Heart right ventricle (tissue), 16 donors: ENCODE measurements at regions of chr9 and their contacts with region 1.

Region 1: GRCh38 chr9:15606643-15607472 is 54.0 kb downstream of the CCDC171 start:
- DNase-seq: peak in 1 of 2 donors; percentile 5
- ATAC-seq: peak in 2 of 8 donors; percentile 52 to 56
- H3K4me3 ChIP-seq: no peak overlapping the region
- H3K27ac ChIP-seq: no peak overlapping the region
- H3K4me1 ChIP-seq: no peaks in the 10 kb centered on the region
- H3K27me3 ChIP-seq: no peaks in the 10 kb centered on the region
- CTCF ChIP-seq: peak; percentile 66 to 87 (median 77)

Region 2: GRCh38 chr9:15211160-15211814 is 395.6 kb before region 1 on chr9:
- intact Hi-C with region 1: loop called (anchors 2 to 10 kb)
- DNase-seq: peak in 1 of 2 donors; percentile 81
- ATAC-seq: peak in 7 of 8 donors; percentile 55 to 83 (median 65)
- H3K4me3 ChIP-seq: no peak overlapping the region
- H3K27ac ChIP-seq: peak overlapping the region in 1 of 10 donors; percentile 22
- H3K4me1 ChIP-seq: peaks cover 0 to 10% (median 7%) of the 10 kb centered on the region in 9 donors
- H3K27me3 ChIP-seq: no peaks in the 10 kb centered on the region
- CTCF ChIP-seq: peak; percentile 80 to 96 (median 92)

Region 3: GRCh38 chr9:15286161-15286821 is 320.6 kb before region 1 on chr9:
- intact Hi-C with region 1: loop called in 2 of 10 experiments (anchors 5 to 10 kb)
- DNase-seq: no peak
- ATAC-seq: no peak
- H3K4me3 ChIP-seq: no peak overlapping the region
- H3K27ac ChIP-seq: no peak overlapping the region
- H3K4me1 ChIP-seq: no peaks in the 10 kb centered on the region
- H3K27me3 ChIP-seq: no peaks in the 10 kb centered on the region
- CTCF ChIP-seq: no peak

Region 4: DNA sequence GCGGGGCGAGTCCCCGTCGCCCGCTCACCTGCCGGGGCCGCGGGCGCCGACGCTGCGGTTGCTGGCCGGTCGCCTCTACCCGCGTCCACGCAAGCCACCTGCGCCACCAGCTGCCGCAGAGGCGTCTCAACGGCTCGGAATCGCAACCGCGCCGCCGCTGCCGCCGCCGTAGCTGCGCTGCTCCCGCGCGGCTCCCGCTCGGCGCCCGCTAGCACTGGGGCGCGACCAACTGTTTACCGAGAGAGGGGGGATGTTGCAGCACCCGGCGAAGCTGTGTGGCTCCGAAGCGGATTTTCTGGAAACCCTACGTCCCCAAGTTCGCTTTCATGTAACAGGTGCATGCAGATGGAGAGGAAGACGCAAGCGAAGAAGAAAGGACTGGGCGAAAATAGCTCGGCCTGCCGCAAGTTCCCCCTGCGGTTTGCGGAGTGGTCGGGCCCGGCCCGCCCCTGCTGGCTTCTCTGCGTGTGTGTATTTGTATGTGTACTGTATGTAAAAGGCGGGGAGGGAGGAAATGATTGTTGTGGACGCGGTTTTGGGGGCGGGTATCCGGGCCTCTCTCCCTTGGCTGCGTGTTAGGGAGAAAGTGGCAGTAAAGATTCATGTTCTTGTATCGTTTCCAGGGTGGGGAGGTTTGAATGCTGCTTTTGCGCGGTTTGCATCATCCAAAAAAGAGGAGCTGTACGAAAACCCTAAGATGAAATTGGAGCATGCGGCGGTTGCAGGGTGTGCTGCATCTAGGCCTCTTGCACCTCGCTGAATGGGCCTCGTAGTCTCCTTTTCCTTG is 95.9 kb before region 1 on chr9 and contains the start of gene PSIP1:
- intact Hi-C with region 1: loop called in 1 of 10 experiments (anchors 10 kb)
- DNase-seq: peak; percentile 81
- ATAC-seq: peak; percentile 92 to 97 (median 94)
- H3K4me3 ChIP-seq: peak within 1 kb of the TSS; percentile 69 to 98 (median 96)
- H3K27ac ChIP-seq: peak within 1 kb of the TSS; percentile 87 to 98 (median 94)
- H3K4me1 ChIP-seq: peaks cover 0 to 32% (median 18%) of the 10 kb centered on the region in 9 donors
- H3K27me3 ChIP-seq: no peaks in the 10 kb centered on the region
- CTCF ChIP-seq: peak in 2 of 9 donors; percentile 11 to 16
- total RNA-seq, gene PSIP1: 16.3 to 31.7 (median 21.3) TPM